ENCODE measurements at regions of chr4 and their contacts with region 1.

Region 1: GRCh38 chr4:15805583-15806517 is 27.7 kb downstream of the CD38 start:
- DNase-seq: peak; percentile 35
- H3K4me3 Mint-ChIP-seq: no peak overlapping the region
- H3K27ac Mint-ChIP-seq: no peak overlapping the region
- H3K4me1 Mint-ChIP-seq: peaks cover 52% of the 10 kb centered on the region
- H3K27me3 Mint-ChIP-seq: no peaks in the 10 kb centered on the region

Region 2: DNA sequence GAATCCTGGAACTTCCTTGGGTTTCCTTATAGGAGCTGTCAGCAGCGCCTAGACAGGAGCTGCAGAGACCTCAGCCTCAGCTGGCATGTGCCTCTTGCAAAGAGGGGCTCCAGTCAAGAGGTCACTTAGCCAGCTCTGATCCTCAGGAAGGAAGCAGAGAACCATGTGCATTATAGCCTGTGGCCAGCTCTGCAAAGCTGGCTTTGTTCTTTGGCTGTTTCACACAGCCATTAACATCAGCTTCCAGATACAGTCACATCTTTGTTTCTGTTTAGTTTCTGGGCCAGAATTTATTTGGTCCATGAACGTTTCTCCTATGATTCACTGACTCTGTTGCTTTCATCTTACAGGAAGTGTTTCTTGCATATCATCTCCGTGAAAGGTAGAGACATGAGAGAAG is 243.7 kb before region 1 on chr4:
- CTCF ChIA-PET with region 1: no interaction called
- POLR2A ChIA-PET with region 1: no interaction called
- DNase-seq: no peak
- H3K4me3 Mint-ChIP-seq: no peak overlapping the region
- H3K27ac Mint-ChIP-seq: no peak overlapping the region
- H3K4me1 Mint-ChIP-seq: no peaks in the 10 kb centered on the region
- H3K27me3 Mint-ChIP-seq: no peaks in the 10 kb centered on the region

Region 3: DNA sequence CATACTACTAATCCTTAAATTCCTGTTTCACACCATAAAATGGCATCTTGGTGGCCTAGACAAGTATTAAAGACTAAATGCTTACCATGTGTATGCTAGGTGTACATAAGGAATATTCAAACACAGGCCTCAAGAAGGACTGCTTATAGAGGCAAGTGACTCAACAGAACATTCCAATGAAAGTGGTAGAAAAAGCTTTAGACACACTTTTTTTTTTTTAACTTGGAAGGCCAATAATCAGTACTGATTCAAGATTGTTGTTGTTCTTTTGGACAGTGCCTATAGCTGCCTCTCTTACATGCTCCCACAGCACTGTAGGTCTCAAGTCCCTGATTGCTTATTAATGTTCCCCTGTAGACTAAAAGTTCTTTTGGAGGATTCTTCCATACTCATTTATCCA is 228.3 kb before region 1 on chr4:
- CTCF ChIA-PET with region 1: no interaction called
- POLR2A ChIA-PET with region 1: no interaction called
- DNase-seq: no peak
- H3K4me3 Mint-ChIP-seq: no peak overlapping the region
- H3K27ac Mint-ChIP-seq: no peak overlapping the region
- H3K4me1 Mint-ChIP-seq: no peaks in the 10 kb centered on the region
- H3K27me3 Mint-ChIP-seq: no peaks in the 10 kb centered on the region

Region 4: GRCh38 chr4:15963576-15963975 is 157.7 kb after region 1 on chr4:
- CTCF ChIA-PET with region 1: no interaction called
- POLR2A ChIA-PET with region 1: no interaction called
- DNase-seq: peak; percentile 46
- H3K4me3 Mint-ChIP-seq: no peak overlapping the region
- H3K27ac Mint-ChIP-seq: no peak overlapping the region
- H3K4me1 Mint-ChIP-seq: peaks cover 18% of the 10 kb centered on the region
- H3K27me3 Mint-ChIP-seq: peaks cover 28% of the 10 kb centered on the region

Region 5: DNA sequence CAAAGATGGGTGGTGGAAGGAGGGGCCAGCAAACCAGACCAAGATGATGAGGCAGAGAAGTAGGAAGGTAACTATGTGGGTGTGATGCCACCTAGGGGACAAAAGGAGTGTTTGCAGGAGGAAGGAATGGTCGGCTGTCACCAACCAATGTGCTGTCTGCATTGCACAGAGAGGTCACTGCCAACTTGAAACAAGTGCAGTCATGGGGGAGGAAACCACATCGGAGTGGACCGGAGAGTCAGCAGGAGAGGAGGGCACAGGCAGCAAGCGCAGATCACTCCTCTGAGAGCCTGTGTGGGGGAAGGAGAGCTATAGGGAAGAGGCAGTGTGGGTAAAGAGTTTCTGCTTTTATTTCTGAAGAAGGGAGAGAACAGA is 195.6 kb after region 1 on chr4:
- CTCF ChIA-PET with region 1: interaction called, 11 read pairs
- POLR2A ChIA-PET with region 1: no interaction called
- DNase-seq: peak; percentile 52
- H3K4me3 Mint-ChIP-seq: no peak overlapping the region
- H3K27ac Mint-ChIP-seq: no peak overlapping the region
- H3K4me1 Mint-ChIP-seq: no peaks in the 10 kb centered on the region
- H3K27me3 Mint-ChIP-seq: peaks cover 12% of the 10 kb centered on the region